Breast epithelium (tissue), 4 donors: ENCODE measurements at regions of chrX and their contacts with region 1.

Region 1: DNA sequence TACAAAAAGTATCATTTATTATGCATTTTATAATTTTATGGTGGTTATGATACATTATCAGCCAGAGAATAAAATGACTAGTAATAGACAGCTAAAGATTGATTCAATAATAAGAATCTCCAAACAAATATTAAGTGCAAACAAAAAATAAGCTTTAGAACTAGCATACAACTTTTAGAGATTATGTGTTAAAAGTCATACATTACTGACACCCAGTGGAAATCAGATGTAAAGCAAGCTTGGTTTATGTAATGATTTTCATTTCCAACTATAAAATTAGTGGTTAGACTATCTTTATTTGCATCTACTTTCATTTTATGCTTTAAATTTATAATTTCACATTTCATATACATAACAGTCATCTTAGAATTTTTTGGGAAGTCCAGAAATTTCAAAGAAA is 57.7 kb downstream of the IL13RA2 start:
- DNase-seq: no peak
- H3K4me3 ChIP-seq: no peak overlapping the region
- H3K27ac ChIP-seq: no peak overlapping the region
- H3K4me1 ChIP-seq: no peaks in the 10 kb centered on the region
- H3K27me3 ChIP-seq: peaks cover 0 to 34% of the 10 kb centered on the region in 2 donors
- CTCF ChIP-seq: peak in 2 of 3 donors; percentile 27 to 41
- POLR2A ChIP-seq: no peak

Region 2: GRCh38 chrX:113297437-113297836 is 1662.3 kb before region 1 on chrX:
- intact Hi-C with region 1: loop called (anchors 10 kb)
- DNase-seq: no peak
- H3K4me3 ChIP-seq: no peak overlapping the region
- H3K27ac ChIP-seq: no peak overlapping the region
- H3K4me1 ChIP-seq: no peaks in the 10 kb centered on the region
- H3K27me3 ChIP-seq: peaks cover 0 to 19% of the 10 kb centered on the region in 2 donors
- CTCF ChIP-seq: no peak
- POLR2A ChIP-seq: no peak

Region 3: DNA sequence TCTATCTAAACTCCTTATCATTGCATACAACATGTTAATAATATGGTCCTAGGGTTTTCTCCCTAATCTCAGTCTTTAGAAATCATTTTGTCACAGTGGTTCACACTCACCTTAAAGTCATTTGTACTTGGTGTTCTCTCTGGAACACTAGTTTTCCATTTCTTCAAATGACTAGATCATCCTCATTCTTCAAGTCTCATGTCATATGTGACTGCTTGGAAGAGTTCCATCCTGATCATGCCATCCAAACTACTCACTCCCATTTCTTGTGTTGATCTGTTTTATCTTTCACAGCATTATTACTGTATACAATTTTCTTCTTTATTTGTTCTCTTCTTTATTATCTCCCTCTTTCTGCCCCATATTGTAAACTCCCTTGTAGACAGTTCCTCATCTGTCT is 309.4 kb before region 1 on chrX:
- intact Hi-C with region 1: no loop called
- DNase-seq: no peak
- H3K4me3 ChIP-seq: no peak overlapping the region
- H3K27ac ChIP-seq: no peak overlapping the region
- H3K4me1 ChIP-seq: no peaks in the 10 kb centered on the region
- H3K27me3 ChIP-seq: peaks cover 0 to 39% of the 10 kb centered on the region in 2 donors
- CTCF ChIP-seq: no peak
- POLR2A ChIP-seq: no peak

Region 4: DNA sequence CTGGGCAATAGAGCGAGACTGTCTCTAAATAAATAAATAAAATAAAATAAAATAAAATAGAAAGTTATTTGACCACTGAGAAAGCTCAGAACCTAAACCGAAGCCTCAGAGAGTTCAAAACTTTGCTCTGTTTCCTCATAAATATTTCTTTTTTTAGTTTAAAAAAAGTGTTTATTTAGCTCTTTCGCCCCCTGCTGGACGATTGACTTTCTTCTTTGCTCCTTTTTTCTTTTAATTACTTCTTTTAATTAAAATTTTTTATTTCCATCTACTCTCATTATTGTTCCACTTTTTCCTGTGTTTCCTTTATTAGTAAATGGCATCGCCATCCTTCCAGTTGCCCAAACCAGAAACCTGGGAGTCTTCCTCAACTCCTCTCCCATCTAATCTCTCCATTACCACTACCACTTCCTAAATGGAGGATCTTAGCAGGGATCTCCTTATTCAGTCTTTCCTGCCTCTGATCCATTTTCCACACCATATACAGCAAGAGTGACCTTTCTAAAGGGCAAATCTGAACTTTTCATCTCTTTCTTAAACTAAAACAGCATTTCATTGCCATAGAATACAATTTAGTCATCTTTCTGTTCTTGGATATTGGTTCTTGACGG is 58.4 kb after region 1 on chrX:
- intact Hi-C with region 1: no loop called
- DNase-seq: no peak
- H3K4me3 ChIP-seq: no peak overlapping the region
- H3K27ac ChIP-seq: no peak overlapping the region
- H3K4me1 ChIP-seq: no peaks in the 10 kb centered on the region
- H3K27me3 ChIP-seq: peaks cover 0 to 47% of the 10 kb centered on the region in 2 donors
- CTCF ChIP-seq: no peak
- POLR2A ChIP-seq: no peak

Region 5: GRCh38 chrX:115719166-115719565 is 759.4 kb after region 1 on chrX:
- intact Hi-C with region 1: no loop called
- DNase-seq: no peak
- H3K4me3 ChIP-seq: no peak overlapping the region
- H3K27ac ChIP-seq: no peak overlapping the region
- H3K4me1 ChIP-seq: no peaks in the 10 kb centered on the region
- H3K27me3 ChIP-seq: peaks cover 0 to 42% of the 10 kb centered on the region in 2 donors
- CTCF ChIP-seq: no peak
- POLR2A ChIP-seq: no peak